Tibial artery (tissue), 4 donors: ENCODE measurements at regions of chr9 and their contacts with region 1.

Region 1: GRCh38 chr9:129676975-129677841 is 11.8 kb downstream of the PRRX2 start:
- DNase-seq: peak; percentile 62 to 85
- H3K4me3 ChIP-seq: no peak overlapping the region
- H3K27ac ChIP-seq: peak overlapping the region; percentile 32 to 56
- H3K4me1 ChIP-seq: peaks cover 0 to 46% (median 20%) of the 10 kb centered on the region in 4 donors
- H3K27me3 ChIP-seq: no peaks in the 10 kb centered on the region
- CTCF ChIP-seq: peak in 1 of 2 experiments; percentile 9

Region 2: GRCh38 chr9:129617167-129617566 is 60.0 kb before region 1 on chr9:
- intact Hi-C with region 1: no loop called
- DNase-seq: no peak
- H3K4me3 ChIP-seq: no peak overlapping the region
- H3K27ac ChIP-seq: no peak overlapping the region
- H3K4me1 ChIP-seq: peaks cover 0 to 23% (median 11%) of the 10 kb centered on the region in 4 donors
- H3K27me3 ChIP-seq: peaks cover 0 to 11% of the 10 kb centered on the region in 2 donors
- CTCF ChIP-seq: no peak

Region 3: DNA sequence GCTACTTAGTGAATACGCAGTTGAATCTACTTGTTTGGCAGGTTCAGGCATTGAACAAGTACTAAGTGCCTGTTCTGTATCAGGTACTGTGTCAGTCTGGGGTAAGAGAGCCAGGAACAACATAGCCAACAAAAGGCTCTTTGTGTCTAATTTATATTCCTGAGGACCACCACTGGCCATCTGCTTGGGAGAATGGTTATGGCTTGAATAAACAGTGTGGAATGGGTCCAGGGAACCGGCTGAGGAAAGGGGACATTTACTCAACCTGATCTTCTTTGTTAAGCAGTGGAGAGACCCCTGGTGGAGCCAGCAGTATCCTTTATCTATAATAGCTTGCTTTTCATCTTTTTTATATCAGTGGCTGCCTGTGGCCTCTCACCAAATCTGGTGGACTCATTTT is 1054.9 kb after region 1 on chr9:
- intact Hi-C with region 1: loop called (anchors 10 kb)
- DNase-seq: no peak
- H3K4me3 ChIP-seq: no peak overlapping the region
- H3K27ac ChIP-seq: no peak overlapping the region
- H3K4me1 ChIP-seq: peaks cover 0 to 11% (median 0%) of the 10 kb centered on the region in 4 donors
- H3K27me3 ChIP-seq: no peaks in the 10 kb centered on the region
- CTCF ChIP-seq: no peak